A549 (cell line): ENCODE measurements at regions of chr10 and their contacts with region 1.

Region 1: GRCh38 chr10:69004821-69005220 is 16.2 kb downstream of the KIFBP start:
- DNase-seq: peak; percentile 35 to 47
- ATAC-seq: peak in 1 of 2 experiments; percentile 42; a peak in 1 of 6 replicates
- H3K4me3 ChIP-seq: no peak overlapping the region
- H3K27ac ChIP-seq: no peak overlapping the region
- H3K4me1 ChIP-seq: no peaks in the 10 kb centered on the region
- CTCF ChIP-seq: peak; percentile 83
- EP300 ChIP-seq: no peak
- POLR2A ChIP-seq: no peak
- RAD21 ChIP-seq: peak; percentile 69 to 81

Region 2: DNA sequence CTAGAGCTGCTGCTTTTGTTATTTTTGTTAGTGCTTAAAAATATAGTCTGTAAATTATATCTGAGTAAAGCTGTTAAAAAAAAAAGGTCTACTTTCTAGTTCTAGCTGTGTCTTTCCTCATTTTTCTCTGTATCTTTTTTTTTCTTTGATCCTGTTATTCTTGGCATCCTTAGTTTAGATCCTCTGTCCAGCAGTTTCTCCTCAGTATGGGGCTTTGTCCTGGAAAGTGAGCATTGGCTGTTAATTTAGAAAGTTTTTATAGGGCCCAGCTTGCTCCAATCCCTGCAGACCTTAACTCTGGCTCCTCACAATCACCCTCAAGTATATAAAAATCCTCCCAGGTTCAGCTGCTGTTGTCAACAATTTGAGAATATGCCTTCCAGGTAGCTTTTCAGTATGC is 80.2 kb before region 1 on chr10:
- CTCF ChIA-PET with region 1: no interaction called
- POLR2A ChIA-PET with region 1: no interaction called
- DNase-seq: no peak
- ATAC-seq: no peak
- H3K4me3 ChIP-seq: no peak overlapping the region
- H3K27ac ChIP-seq: no peak overlapping the region
- H3K4me1 ChIP-seq: no peaks in the 10 kb centered on the region
- CTCF ChIP-seq: no peak
- EP300 ChIP-seq: no peak
- POLR2A ChIP-seq: no peak
- RAD21 ChIP-seq: no peak

Region 3: DNA sequence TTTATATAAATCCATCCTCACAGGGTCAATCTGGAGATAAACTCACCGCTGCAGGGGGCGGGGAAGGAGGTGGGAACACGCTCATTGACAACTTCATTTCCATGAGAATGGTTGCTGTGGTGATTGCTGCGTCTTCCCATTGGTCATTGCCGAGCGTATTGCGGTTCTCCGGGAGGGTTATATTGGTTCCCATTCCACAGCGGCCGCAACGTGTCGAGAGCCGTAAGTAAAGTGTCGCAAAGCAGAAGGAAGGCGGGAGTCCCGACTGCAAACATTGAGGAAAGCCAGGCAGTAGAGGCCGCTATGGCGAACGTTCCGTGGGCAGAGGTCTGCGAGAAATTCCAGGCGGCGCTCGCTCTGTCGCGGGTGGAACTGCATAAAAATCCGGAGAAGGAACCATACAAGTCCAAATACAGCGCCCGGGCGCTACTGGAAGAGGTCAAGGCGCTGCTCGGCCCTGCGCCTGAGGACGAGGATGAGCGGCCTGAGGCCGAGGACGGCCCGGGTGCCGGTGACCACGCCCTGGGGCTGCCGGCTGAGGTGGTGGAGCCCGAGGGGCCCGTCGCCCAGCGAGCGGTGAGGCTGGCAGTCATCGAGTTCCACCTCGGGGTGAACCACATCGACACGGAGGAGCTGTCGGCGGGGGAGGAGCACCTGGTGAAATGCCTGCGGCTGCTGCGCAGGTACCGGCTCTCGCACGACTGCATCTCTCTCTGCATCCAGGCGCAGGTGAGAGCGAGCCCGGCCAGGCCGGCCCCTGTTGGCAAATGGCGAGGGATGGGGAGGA is 16.1 kb before region 1 on chr10 and contains the start of gene KIFBP:
- CTCF ChIA-PET with region 1: interaction called, 22 read pairs
- POLR2A ChIA-PET with region 1: no interaction called
- DNase-seq: peak; percentile 98
- ATAC-seq: peak; percentile 86 to 92
- H3K4me3 ChIP-seq: peak within 1 kb of the TSS; percentile 94
- H3K27ac ChIP-seq: peak within 1 kb of the TSS; percentile 87 to 95
- H3K4me1 ChIP-seq: peaks cover 30% of the 10 kb centered on the region
- CTCF ChIP-seq: peak; percentile 51
- EP300 ChIP-seq: no peak
- POLR2A ChIP-seq: peak; percentile 71
- RAD21 ChIP-seq: peak; percentile 33 to 40; a peak in 4 of 5 replicates
- polyA plus RNA-seq, gene KIFBP: 43.7 and 53.8 TPM in 2 replicates

Region 4: DNA sequence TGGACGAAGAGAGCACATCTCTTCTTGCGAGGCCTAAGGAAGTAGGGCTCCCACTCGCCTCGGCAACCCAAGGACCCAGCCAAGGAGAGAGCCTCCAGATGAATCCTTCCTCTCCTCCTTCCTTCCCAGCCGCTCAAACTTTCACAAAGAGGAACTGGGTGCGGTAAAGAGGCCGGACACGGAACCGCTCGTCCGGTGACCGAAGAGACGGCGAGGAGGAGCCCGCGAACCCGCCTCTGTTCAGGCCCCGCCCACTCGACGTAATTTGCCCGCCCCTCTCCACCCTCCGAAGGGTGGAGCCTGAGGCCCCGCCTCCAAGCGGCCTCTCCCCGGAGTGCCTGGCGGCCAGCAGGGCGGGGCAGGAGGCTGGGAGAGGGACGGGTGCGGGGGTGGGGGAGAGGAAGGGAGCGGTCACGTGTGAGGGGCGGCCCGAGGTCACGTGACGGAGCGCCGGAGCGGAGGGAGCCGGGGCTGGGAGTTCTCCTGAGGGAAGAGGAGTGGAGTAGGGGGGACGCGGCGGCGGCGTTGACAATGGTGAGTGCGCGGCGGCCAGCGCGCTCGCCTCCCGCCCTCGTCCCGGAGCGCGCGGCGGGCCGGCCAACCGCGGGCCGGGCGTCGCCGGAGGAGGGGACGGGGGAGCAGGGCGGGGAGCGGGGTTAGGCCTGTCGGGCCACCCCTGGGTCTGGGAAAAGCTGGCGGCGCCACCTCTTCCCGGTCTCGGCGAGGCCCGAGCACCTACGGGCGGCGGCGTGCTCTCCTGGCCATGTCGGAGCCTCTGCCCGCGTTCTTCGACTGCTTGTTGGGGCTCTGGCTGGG is 119.1 kb after region 1 on chr10 and contains the start of gene VPS26A:
- CTCF ChIA-PET with region 1: interaction called, 21 read pairs
- POLR2A ChIA-PET with region 1: no interaction called
- DNase-seq: peak; percentile 92 to 98
- ATAC-seq: peak; percentile 84 to 89
- H3K4me3 ChIP-seq: peak within 1 kb of the TSS; percentile 77
- H3K27ac ChIP-seq: peak within 1 kb of the TSS; percentile 89 to 92
- H3K4me1 ChIP-seq: peaks cover 15% of the 10 kb centered on the region
- CTCF ChIP-seq: peak; percentile 58; the same call in 2 of the 3 replicates
- EP300 ChIP-seq: no peak
- POLR2A ChIP-seq: peak; percentile 76
- RAD21 ChIP-seq: peak in 1 of 2 experiments; percentile 62; a peak in 2 of 5 replicates
- polyA plus RNA-seq, gene VPS26A: 35.0 and 52.6 TPM in 2 replicates